B cell (primary cell): ENCODE measurements at regions of chr9 and their contacts with region 1.

Region 1: GRCh38 chr9:112717661-112718341 is at the start of gene INIP:
- DNase-seq: peak; percentile 98
- ATAC-seq: peak; percentile 93
- H3K4me3 ChIP-seq: peak within 1 kb of the TSS; percentile 81 to 92 (median 87)
- H3K4me3 Mint-ChIP-seq: peak within 1 kb of the TSS; percentile 97
- H3K27ac ChIP-seq: peak within 1 kb of the TSS; percentile 88 to 95
- H3K27ac Mint-ChIP-seq: peak within 1 kb of the TSS; percentile 98
- H3K4me1 ChIP-seq: peaks cover 6 to 16% of the 10 kb centered on the region in 2 donors
- H3K4me1 Mint-ChIP-seq: peaks cover 17% of the 10 kb centered on the region
- H3K27me3 ChIP-seq: no peaks in the 10 kb centered on the region
- H3K27me3 Mint-ChIP-seq: no peaks in the 10 kb centered on the region
- CTCF ChIP-seq: no peak
- total RNA-seq, gene INIP: 22.9 and 27.8 TPM in 2 replicates

Region 2: GRCh38 chr9:111661150-111661801 is 1056.5 kb before region 1 on chr9 and contains the start of gene GNG10:
- CTCF ChIA-PET with region 1: no interaction called
- POLR2A ChIA-PET with region 1: no interaction called
- intact Hi-C with region 1: loop called (anchors 10 kb)
- DNase-seq: peak; percentile 75
- ATAC-seq: peak; percentile 94
- H3K4me3 ChIP-seq: peak within 1 kb of the TSS; percentile 61 to 92 (median 74)
- H3K4me3 Mint-ChIP-seq: peak within 1 kb of the TSS; percentile 99
- H3K27ac ChIP-seq: peak within 1 kb of the TSS; percentile 37 to 51
- H3K27ac Mint-ChIP-seq: peak within 1 kb of the TSS; percentile 91
- H3K4me1 ChIP-seq: peaks cover 11 to 20% of the 10 kb centered on the region in 2 donors
- H3K4me1 Mint-ChIP-seq: peaks cover 29% of the 10 kb centered on the region
- H3K27me3 ChIP-seq: no peaks in the 10 kb centered on the region
- H3K27me3 Mint-ChIP-seq: no peaks in the 10 kb centered on the region
- CTCF ChIP-seq: no peak
- total RNA-seq, gene GNG10: 5.2 and 7.2 TPM in 2 replicates

Region 3: DNA sequence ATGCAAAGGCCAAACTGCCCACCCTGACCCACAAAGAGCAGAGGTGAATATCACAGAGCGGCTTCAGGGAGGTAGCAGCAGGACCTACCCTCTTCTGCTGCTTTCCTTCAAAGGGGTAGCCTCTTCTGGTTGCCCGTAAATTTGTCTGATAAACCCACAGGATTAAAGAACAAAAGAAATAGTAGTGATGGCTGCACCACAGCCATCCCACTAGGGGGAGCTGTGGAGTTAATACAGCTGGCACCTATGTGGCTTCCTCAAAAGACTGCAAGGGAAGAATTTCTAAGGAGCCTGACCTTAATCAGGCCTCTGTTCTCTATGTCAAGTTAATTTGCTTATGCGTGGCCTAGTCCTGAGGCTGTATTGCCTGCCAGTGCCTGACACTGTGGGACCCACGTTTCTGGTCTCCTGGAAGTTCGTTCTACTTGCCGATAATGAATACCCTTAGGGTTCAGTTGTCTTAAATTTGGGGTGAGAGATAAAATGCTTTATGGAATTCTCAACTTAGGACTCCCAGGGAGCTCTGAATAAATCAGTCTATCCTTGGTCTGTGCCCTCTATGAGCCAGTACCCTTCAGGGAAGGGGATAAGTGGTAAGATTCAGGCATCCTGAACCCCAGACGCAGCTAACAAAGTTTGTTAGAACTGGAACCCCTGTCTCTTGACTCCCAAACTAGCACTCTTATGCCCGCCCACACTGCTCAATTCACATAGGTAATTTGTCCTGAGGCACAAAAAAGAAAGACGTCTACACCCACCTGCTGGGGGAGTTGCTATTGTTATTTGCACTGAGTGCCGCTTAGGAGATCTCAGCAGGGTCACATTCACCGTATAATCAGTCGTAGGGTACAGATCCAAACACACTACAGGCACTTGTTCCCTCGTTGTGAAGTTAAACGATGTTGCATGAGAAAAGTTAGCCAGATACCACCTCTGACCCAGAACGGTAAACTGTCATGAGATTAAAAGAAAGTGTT is 619.8 kb before region 1 on chr9:
- CTCF ChIA-PET with region 1: no interaction called
- POLR2A ChIA-PET with region 1: no interaction called
- intact Hi-C with region 1: loop called (anchors 10 kb)
- DNase-seq: peak; percentile 86
- ATAC-seq: peak; percentile 94
- H3K4me3 ChIP-seq: no peak overlapping the region
- H3K4me3 Mint-ChIP-seq: no peak overlapping the region
- H3K27ac ChIP-seq: no peak overlapping the region
- H3K27ac Mint-ChIP-seq: peak overlapping the region; percentile 16
- H3K4me1 ChIP-seq: peaks cover 10 to 13% of the 10 kb centered on the region in 2 donors
- H3K4me1 Mint-ChIP-seq: peaks cover 37% of the 10 kb centered on the region
- H3K27me3 ChIP-seq: no peaks in the 10 kb centered on the region
- H3K27me3 Mint-ChIP-seq: no peaks in the 10 kb centered on the region
- CTCF ChIP-seq: peak; percentile 94

Region 4: GRCh38 chr9:112379177-112380101 is 338.4 kb before region 1 on chr9:
- CTCF ChIA-PET with region 1: interaction called, 5 read pairs
- POLR2A ChIA-PET with region 1: interaction called, 4 read pairs
- intact Hi-C with region 1: loop called (anchors 1 kb)
- DNase-seq: peak; percentile 96
- ATAC-seq: peak; percentile 93
- H3K4me3 ChIP-seq: peak overlapping the region; percentile 82 to 98 (median 89)
- H3K4me3 Mint-ChIP-seq: peak overlapping the region; percentile 95
- H3K27ac ChIP-seq: peak overlapping the region; percentile 78 to 88
- H3K27ac Mint-ChIP-seq: peak overlapping the region; percentile 92
- H3K4me1 ChIP-seq: peaks cover 27 to 30% of the 10 kb centered on the region in 2 donors
- H3K4me1 Mint-ChIP-seq: peaks cover 59% of the 10 kb centered on the region
- H3K27me3 ChIP-seq: no peaks in the 10 kb centered on the region
- H3K27me3 Mint-ChIP-seq: no peaks in the 10 kb centered on the region
- CTCF ChIP-seq: no peak

Region 5: DNA sequence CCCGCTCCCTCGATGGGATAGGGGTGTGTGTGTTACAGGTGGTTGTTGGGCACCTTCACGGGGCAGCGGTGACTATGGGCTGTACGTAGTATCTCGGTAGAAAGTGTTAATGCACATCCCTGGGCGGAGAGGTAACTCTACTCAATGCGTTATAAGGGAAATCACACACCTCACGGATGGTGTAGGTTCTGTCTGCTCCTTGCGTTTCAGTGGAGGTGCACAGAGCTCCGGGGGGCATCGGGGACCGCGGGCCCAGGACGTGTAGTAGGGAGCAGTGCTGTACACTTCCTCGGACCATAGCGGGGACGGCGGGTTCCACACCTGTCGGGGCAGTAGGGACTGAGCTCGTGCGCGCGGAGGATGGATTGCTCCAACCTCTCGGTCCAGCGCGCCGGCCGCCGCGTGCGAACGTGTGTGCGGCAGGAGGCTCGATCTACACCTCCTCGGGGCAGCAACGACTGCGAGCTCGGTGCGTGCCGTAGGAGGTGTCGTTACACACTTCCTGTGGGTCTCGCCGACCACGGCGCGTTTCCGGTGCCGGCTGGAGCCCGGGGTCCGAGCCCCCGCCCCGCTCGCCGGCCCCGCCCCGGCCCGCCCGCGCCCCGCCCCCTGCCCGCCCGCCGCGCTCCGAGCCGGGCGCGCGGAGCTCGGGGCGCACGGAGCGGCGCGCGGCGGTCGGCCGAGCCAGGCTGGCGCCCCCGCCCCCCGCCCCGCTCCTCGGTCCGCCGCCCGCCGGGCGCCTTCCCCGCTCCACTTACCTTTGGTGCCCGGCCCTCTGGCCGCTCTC is 231.4 kb before region 1 on chr9 and contains the start of gene KIAA1958:
- CTCF ChIA-PET with region 1: interaction called, 3 read pairs
- POLR2A ChIA-PET with region 1: no interaction called
- intact Hi-C with region 1: loop called (anchors 2 kb)
- DNase-seq: peak; percentile 88
- ATAC-seq: peak; percentile 87
- H3K4me3 ChIP-seq: peak within 1 kb of the TSS; percentile 71 to 85 (median 77)
- H3K4me3 Mint-ChIP-seq: peak within 1 kb of the TSS; percentile 100
- H3K27ac ChIP-seq: peak within 1 kb of the TSS; percentile 58 to 69
- H3K27ac Mint-ChIP-seq: peak within 1 kb of the TSS; percentile 96
- H3K4me1 ChIP-seq: peaks cover 5 to 13% of the 10 kb centered on the region in 2 donors
- H3K4me1 Mint-ChIP-seq: peaks cover 22% of the 10 kb centered on the region
- H3K27me3 ChIP-seq: no peaks in the 10 kb centered on the region
- H3K27me3 Mint-ChIP-seq: no peaks in the 10 kb centered on the region
- CTCF ChIP-seq: no peak
- total RNA-seq, gene KIAA1958: 15.3 and 17.2 TPM in 2 replicates

Region 6: DNA sequence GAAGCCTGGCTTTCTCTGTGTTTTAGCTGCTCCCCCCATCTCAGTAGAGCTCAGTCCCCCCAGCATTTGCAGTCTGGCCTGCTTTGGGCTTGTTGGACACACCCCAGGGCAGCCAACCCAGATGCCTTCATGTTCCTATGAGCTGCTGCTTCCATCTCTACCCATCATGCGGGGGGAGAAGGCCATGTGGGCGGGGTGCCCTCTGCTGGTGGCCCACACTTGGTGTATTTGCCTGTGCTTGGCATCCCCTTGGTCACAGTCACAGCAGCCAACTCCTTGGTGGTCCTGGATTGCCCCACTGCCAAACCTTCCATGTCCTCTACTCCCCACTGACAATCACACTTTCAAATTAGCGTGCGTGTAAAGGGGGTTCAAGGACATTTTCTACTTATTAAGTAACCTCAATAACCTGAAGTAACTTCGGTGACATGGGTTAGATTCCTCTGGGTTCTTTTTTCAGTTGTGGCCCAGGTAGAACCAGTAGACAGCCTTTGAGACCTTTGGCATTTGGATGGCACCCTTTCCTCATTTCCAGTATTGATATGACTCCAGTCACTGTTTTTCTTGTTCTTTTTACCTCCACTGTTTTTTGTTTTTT is 75.5 kb after region 1 on chr9:
- CTCF ChIA-PET with region 1: interaction called, 15 read pairs
- POLR2A ChIA-PET with region 1: interaction called, 7 read pairs
- intact Hi-C with region 1: loop called (anchors 1 kb)
- DNase-seq: peak; percentile 85
- ATAC-seq: peak; percentile 97
- H3K4me3 ChIP-seq: no peak overlapping the region
- H3K4me3 Mint-ChIP-seq: no peak overlapping the region
- H3K27ac ChIP-seq: no peak overlapping the region
- H3K27ac Mint-ChIP-seq: peak overlapping the region; percentile 46
- H3K4me1 ChIP-seq: peaks cover 6 to 7% of the 10 kb centered on the region in 2 donors
- H3K4me1 Mint-ChIP-seq: peaks cover 27% of the 10 kb centered on the region
- H3K27me3 ChIP-seq: no peaks in the 10 kb centered on the region
- H3K27me3 Mint-ChIP-seq: no peaks in the 10 kb centered on the region
- CTCF ChIP-seq: peak; percentile 88

Region 7: DNA sequence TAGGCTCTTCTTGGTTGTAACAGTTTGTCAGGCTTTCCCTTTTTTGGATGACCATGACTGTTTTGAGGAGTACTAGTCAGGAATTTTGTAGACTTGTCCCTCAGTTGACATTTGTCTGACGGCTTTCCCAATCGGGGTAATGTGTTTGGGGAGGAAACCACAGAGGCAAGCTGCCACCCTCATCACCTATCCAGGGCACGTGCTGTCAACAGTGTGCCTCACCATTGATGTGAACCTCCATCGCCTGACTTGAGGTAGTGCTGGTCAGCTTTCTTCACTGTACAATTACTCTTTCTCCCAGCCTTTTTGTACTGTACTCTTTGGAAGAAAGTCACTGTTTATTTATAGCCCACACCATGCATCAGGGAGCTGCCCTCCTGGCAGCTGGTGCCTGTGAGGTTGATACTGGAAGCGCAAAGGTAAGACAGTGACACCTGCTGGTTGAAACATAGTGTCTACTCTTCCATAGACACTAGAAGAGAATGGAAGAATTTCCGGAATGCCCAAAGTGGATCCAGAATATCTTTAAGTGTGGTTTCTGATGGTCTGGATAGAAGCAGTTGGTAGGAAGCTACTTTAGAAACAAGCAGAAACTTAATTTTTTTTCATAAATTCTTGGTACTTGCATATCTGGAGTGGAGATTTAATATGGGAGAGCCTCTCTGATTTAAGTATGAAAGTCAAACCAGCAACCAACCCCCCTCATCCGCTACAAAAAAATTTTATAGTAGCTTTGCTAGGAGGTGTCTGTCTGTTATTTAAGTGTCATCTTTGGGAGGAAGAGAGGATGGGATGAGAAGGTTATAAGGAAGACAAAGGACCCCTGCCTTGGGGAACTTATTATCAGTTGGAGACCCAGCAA is 102.1 kb after region 1 on chr9:
- CTCF ChIA-PET with region 1: interaction called, 15 read pairs
- POLR2A ChIA-PET with region 1: no interaction called
- intact Hi-C with region 1: no loop called
- DNase-seq: peak; percentile 63
- ATAC-seq: peak; percentile 70
- H3K4me3 ChIP-seq: no peak overlapping the region
- H3K4me3 Mint-ChIP-seq: peak overlapping the region; percentile 8
- H3K27ac ChIP-seq: no peak overlapping the region
- H3K27ac Mint-ChIP-seq: no peak overlapping the region
- H3K4me1 ChIP-seq: peaks cover 10 to 15% of the 10 kb centered on the region in 2 donors
- H3K4me1 Mint-ChIP-seq: peaks cover 17% of the 10 kb centered on the region
- H3K27me3 ChIP-seq: no peaks in the 10 kb centered on the region
- H3K27me3 Mint-ChIP-seq: peaks cover 6% of the 10 kb centered on the region
- CTCF ChIP-seq: peak; percentile 68